ENCODE measurements at regions of chr2 and their contacts with region 1.

Region 1: GRCh38 chr2:225122583-225123486 is 80.6 kb upstream of the DOCK10 start:
- H3K4me3 Mint-ChIP-seq: no peak overlapping the region
- H3K27ac Mint-ChIP-seq: no peak overlapping the region
- H3K4me1 Mint-ChIP-seq: peaks cover 5% of the 10 kb centered on the region
- H3K27me3 Mint-ChIP-seq: peaks cover 4% of the 10 kb centered on the region

Region 2: DNA sequence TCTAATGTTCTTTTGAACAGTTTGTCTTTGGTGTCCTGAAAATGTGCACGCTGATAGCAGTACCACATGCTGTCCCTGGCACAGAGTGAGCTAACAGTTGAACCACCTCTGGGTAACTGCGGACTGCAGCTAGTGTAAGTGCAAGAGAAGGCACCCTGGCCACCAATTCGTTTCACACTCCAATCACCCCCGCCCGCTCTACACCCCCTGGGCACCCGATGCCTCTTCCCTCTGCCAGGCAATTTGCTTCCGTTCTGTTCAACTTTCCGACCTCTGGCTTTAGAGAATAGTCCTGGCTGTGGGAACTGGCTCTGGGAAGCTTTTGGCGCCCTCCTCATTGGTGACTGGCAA is 82.0 kb before region 1 on chr2:
- intact Hi-C with region 1: no loop called
- H3K4me3 Mint-ChIP-seq: peak overlapping the region; percentile 88
- H3K27ac Mint-ChIP-seq: peak overlapping the region; percentile 98
- H3K4me1 Mint-ChIP-seq: peaks cover 56% of the 10 kb centered on the region
- H3K27me3 Mint-ChIP-seq: peaks cover 9% of the 10 kb centered on the region

Region 3: GRCh38 chr2:225270861-225271260 is 148.0 kb after region 1 on chr2:
- intact Hi-C with region 1: loop called (anchors 10 kb)
- H3K4me3 Mint-ChIP-seq: no peak overlapping the region
- H3K27ac Mint-ChIP-seq: no peak overlapping the region
- H3K4me1 Mint-ChIP-seq: peaks cover 10% of the 10 kb centered on the region
- H3K27me3 Mint-ChIP-seq: no peaks in the 10 kb centered on the region

Region 4: DNA sequence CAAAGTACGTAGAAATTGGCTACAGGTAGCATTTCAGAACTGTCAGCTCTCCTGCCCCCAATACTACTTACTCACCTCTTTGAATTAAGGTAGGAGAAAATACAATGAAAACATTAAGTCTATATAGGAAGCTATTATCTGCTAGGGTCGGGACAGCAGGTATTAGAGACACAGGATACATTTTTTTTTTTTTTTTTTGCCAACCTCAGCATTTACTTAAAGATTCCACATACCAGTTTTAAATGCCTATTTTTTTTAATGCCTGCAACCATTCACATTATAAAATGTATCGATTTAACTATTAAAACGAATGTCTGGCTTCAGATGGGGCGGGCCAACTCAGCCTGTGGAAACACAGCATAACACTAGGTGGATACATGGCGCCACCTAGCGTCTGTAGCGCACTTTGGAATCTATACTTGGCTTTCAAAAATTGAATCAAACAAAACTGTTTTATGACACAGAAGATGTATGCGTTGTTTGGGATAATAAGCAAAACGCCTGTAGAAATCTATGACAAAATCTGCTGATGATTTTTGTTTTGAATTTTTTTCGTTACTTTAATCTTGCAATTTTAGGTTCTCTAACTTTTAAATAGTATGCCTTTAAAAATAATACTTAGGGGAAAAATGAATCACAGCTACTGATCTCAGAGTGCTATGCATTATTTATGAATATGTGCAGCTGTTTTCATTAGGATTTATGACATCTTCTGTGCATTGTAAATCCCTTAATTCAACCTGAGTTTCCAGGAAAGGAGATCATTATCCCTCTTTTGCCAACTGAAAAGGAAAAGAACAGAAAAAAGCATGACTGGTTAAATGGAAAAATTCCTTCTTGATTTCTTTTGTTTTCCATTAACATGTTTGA is 537.7 kb after region 1 on chr2:
- intact Hi-C with region 1: loop called (anchors 2 kb)
- H3K4me3 Mint-ChIP-seq: no peak overlapping the region
- H3K27ac Mint-ChIP-seq: no peak overlapping the region
- H3K4me1 Mint-ChIP-seq: peaks cover 4% of the 10 kb centered on the region
- H3K27me3 Mint-ChIP-seq: peaks cover 5% of the 10 kb centered on the region